ENCODE measurements at regions of chr6 and their contacts with region 1.

Region 1: DNA sequence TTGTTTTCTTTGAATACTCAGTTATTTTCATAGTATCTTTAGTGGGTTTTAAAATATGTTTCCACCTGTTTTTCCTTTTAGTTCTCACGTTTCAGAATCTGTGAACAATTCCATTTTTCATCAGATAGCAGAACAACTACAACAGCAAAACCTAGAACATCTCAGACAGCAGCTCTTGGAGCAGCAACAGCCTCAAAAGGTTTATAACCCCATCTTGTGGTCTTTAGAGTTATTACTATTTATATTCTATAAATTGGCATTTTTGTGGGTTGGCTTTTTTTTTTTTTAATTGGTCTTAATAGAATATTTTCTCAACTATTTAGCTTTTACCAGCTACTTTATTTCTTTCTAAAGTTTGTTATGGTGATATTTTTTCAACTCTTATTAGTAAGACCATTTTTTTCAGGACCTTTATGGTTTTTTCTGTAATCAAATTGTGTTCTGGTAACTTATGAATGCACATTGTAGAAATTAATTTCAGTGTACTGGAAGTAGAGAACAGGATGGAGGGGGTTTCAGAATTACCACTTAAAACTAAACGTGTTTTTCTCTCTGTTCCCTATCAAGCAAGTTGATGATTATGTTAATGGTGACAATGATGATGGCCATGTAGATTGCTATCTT is 72.2 kb downstream of the SCAF8 start:
- DNase-seq: no peak

Region 2: GRCh38 chr6:154675602-154676088 is 129.8 kb before region 1 on chr6:
- intact Hi-C with region 1: loop called (anchors 2 kb)
- DNase-seq: peak; percentile 90

Region 3: DNA sequence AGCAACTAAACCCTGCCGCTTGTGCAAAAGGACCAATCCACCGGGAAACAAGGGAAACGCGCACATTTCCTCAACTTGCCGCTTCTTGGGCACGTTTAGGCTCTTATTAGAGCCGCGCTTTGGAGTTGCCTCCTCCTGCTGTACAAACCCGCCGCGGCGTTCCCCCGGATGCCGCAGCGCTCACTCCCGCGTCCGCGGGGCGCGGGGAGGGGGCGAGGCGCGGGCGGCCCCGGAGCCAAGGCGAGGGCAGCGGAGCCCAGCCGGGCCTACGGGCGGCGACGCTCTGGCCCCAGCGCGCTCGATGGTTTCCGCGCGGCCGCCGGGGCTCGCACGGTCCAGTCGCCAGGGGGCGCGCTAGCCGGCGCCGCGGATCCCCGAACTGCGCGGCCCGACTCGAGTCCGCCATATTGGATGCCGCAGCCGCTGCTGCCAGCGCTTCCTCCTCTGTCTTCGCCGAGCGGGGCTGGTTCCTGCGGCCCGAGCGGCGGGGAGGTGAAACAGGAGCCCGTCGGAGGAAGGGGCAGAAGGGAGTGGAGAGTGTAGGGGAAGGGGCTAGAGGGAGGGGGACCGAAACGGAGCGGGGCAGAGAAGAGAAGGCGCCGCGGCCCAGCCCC is 72.3 kb before region 1 on chr6 and contains the start of gene SCAF8:
- intact Hi-C with region 1: loop called (anchors 1 kb)
- DNase-seq: peak; percentile 93
- total RNA-seq, gene SCAF8: 62.7 TPM